Right cardiac atrium (tissue), 5 donors: ENCODE measurements at regions of chr15 and their contacts with region 1.

Region 1: GRCh38 chr15:97009031-97009431 is 678.5 kb downstream of the NR2F2 start:
- DNase-seq: no peak
- ATAC-seq: no peak
- H3K4me3 ChIP-seq: no peak overlapping the region
- H3K27ac ChIP-seq: no peak overlapping the region
- H3K4me1 ChIP-seq: no peaks in the 10 kb centered on the region
- H3K27me3 ChIP-seq: no peaks in the 10 kb centered on the region

Region 2: GRCh38 chr15:96359616-96360521 is 649.2 kb before region 1 on chr15:
- intact Hi-C with region 1: no loop called
- DNase-seq: peak; percentile 50 to 80 (median 74)
- ATAC-seq: peak; percentile 57 to 59
- H3K4me3 ChIP-seq: peak overlapping the region; percentile 30
- H3K27ac ChIP-seq: no peak overlapping the region
- H3K4me1 ChIP-seq: no peaks in the 10 kb centered on the region
- H3K27me3 ChIP-seq: no peaks in the 10 kb centered on the region

Region 3: GRCh38 chr15:96462777-96463750 is 546.0 kb before region 1 on chr15:
- intact Hi-C with region 1: loop called in 1 of 4 experiments (anchors 10 kb)
- DNase-seq: no peak
- ATAC-seq: no peak
- H3K4me3 ChIP-seq: no peak overlapping the region
- H3K27ac ChIP-seq: no peak overlapping the region
- H3K4me1 ChIP-seq: no peaks in the 10 kb centered on the region
- H3K27me3 ChIP-seq: peaks cover 3% of the 10 kb centered on the region